CD4-positive, alpha-beta memory T cell (primary cell): ENCODE measurements at regions of chr10 and their contacts with region 1.

Region 1: GRCh38 chr10:89404104-89405047 is 10.0 kb upstream of the IFIT5 start:
- DNase-seq: no peak
- H3K4me3 ChIP-seq: no peak overlapping the region
- H3K4me3 Mint-ChIP-seq: no peak overlapping the region
- H3K27ac ChIP-seq: no peak overlapping the region
- H3K27ac Mint-ChIP-seq: peak overlapping the region in 1 of 7 donors; percentile 51
- H3K4me1 ChIP-seq: no peaks in the 10 kb centered on the region
- H3K4me1 Mint-ChIP-seq: peaks cover 3 to 14% (median 6%) of the 10 kb centered on the region in 4 donors
- H3K27me3 ChIP-seq: no peaks in the 10 kb centered on the region
- H3K27me3 Mint-ChIP-seq: no peaks in the 10 kb centered on the region

Region 2: GRCh38 chr10:89391917-89392756 is 12.2 kb before region 1 on chr10 and contains the start of gene IFIT1:
- CTCF ChIA-PET with region 1: interaction called, 10 read pairs
- POLR2A ChIA-PET with region 1: interaction called, 11 read pairs
- intact Hi-C with region 1: no loop called
- DNase-seq: peak; percentile 57 to 81 (median 79)
- H3K4me3 ChIP-seq: peak within 1 kb of the TSS; percentile 69 to 82
- H3K4me3 Mint-ChIP-seq: peak within 1 kb of the TSS; percentile 85 to 97 (median 94)
- H3K27ac ChIP-seq: peak within 1 kb of the TSS; percentile 68
- H3K27ac Mint-ChIP-seq: peak within 1 kb of the TSS; percentile 76 to 98 (median 95)
- H3K4me1 ChIP-seq: peaks cover 31% of the 10 kb centered on the region
- H3K4me1 Mint-ChIP-seq: peaks cover 13 to 35% (median 31%) of the 10 kb centered on the region in 4 donors
- H3K27me3 ChIP-seq: no peaks in the 10 kb centered on the region
- H3K27me3 Mint-ChIP-seq: no peaks in the 10 kb centered on the region
- total RNA-seq, gene IFIT1: 5.1 to 6.3 TPM

Region 3: DNA sequence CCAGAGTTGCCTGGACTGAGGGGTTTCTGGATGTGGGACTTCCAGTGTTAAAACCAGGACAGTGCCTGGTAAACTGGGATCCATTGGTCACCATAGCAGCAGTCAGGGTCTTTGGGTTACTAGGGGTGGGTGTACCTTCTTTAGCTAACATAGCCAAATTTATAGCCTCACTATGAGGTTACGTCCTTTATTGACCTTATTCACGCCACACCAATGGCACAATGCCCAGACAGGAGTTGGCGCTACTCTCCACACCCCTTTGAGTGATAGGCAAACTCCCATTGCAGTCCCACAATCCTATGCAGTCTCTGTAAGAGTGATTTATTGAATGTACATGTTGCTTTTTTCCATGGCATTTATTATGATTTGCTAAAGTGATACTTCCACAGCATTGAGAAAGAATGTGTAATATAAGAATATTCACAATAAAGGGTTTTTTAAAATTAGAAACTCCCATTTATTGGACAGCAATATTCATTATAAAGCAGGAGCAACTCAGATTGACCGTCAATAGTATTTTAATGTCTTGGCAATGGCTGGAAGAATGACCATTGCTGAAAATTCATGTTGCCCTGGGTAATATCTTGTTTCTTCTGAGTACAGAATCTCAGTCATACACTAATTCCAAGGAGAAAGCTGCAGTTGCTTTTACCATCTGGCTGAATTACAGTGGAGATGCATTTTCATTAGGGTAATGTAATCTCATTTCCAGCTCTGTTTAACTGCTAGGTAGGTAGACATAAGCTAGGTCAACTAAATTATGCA is 36.1 kb after region 1 on chr10:
- CTCF ChIA-PET with region 1: no interaction called
- POLR2A ChIA-PET with region 1: no interaction called
- intact Hi-C with region 1: no loop called
- DNase-seq: no peak
- H3K4me3 ChIP-seq: no peak overlapping the region
- H3K4me3 Mint-ChIP-seq: no peak overlapping the region
- H3K27ac ChIP-seq: no peak overlapping the region
- H3K27ac Mint-ChIP-seq: no peak overlapping the region
- H3K4me1 ChIP-seq: no peaks in the 10 kb centered on the region
- H3K4me1 Mint-ChIP-seq: no peaks in the 10 kb centered on the region
- H3K27me3 ChIP-seq: no peaks in the 10 kb centered on the region
- H3K27me3 Mint-ChIP-seq: peaks cover 16 to 23% of the 10 kb centered on the region in 2 donors